ENCODE measurements at regions of chr21 and their contacts with region 1.

Region 1: GRCh38 chr21:32569261-32570230 is 15.8 kb downstream of the TCP10L start:
- DNase-seq: peak; percentile 70 to 93 (median 78)
- ATAC-seq: peak; percentile 87
- H3K4me3 ChIP-seq: peak overlapping the region; percentile 70
- H3K4me3 Mint-ChIP-seq: peak overlapping the region; percentile 90
- H3K27ac ChIP-seq: peak overlapping the region; percentile 40 to 50
- H3K27ac Mint-ChIP-seq: peak overlapping the region; percentile 86
- H3K4me1 ChIP-seq: peaks cover 22% of the 10 kb centered on the region
- H3K4me1 Mint-ChIP-seq: peaks cover 21% of the 10 kb centered on the region
- H3K27me3 ChIP-seq: no peaks in the 10 kb centered on the region
- H3K27me3 Mint-ChIP-seq: no peaks in the 10 kb centered on the region
- CTCF ChIP-seq: peak; percentile 88

Region 2: DNA sequence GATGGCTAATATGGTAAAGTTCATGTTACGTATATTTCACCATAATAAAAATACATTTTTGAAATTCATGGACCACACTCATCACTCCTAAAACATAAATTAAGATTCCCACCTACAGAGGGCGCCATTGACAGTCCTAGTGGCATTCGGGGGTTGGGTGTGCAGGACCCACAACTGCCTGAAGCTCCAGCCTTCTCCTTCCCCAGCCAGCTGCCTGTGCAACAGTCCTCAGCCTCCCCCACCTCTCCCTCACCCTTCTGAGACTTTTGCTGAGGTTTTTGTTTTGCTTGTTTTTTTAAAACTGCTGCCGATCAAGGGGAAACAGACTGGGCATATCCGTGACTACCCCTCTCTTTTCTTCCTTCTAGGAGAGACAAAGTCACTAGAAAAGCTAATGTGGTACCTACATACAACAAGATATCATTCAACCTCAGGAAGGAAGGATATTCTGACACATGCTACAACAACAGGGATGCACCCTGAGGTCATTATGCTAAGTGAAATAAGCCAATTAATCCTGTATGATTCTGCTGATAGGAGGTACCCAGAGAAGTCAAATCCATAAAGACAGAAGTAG is 166.3 kb before region 1 on chr21:
- CTCF ChIA-PET with region 1: interaction called, 7 read pairs
- POLR2A ChIA-PET with region 1: interaction called, 6 read pairs
- intact Hi-C with region 1: loop called (anchors 2 kb)
- DNase-seq: peak in 13 of 14 experiments; percentile 12 to 80 (median 42)
- ATAC-seq: peak; percentile 83
- H3K4me3 ChIP-seq: no peak overlapping the region
- H3K4me3 Mint-ChIP-seq: no peak overlapping the region
- H3K27ac ChIP-seq: no peak overlapping the region
- H3K27ac Mint-ChIP-seq: no peak overlapping the region
- H3K4me1 ChIP-seq: peaks cover 5% of the 10 kb centered on the region
- H3K4me1 Mint-ChIP-seq: peaks cover 9% of the 10 kb centered on the region
- H3K27me3 ChIP-seq: no peaks in the 10 kb centered on the region
- H3K27me3 Mint-ChIP-seq: peaks cover 2% of the 10 kb centered on the region
- CTCF ChIP-seq: peak; percentile 67

Region 3: GRCh38 chr21:32412162-32413014 is 157.2 kb before region 1 on chr21 and contains the start of gene EVA1C:
- CTCF ChIA-PET with region 1: no interaction called
- POLR2A ChIA-PET with region 1: interaction called, 52 read pairs
- intact Hi-C with region 1: loop called in 1 of 2 experiments (anchors 2 kb)
- DNase-seq: peak; percentile 54 to 92 (median 66)
- ATAC-seq: peak; percentile 62
- H3K4me3 ChIP-seq: peak within 1 kb of the TSS; percentile 96
- H3K4me3 Mint-ChIP-seq: peak within 1 kb of the TSS; percentile 97
- H3K27ac ChIP-seq: peak within 1 kb of the TSS; percentile 64 to 96
- H3K27ac Mint-ChIP-seq: peak within 1 kb of the TSS; percentile 97
- H3K4me1 ChIP-seq: peaks cover 31% of the 10 kb centered on the region
- H3K4me1 Mint-ChIP-seq: peaks cover 52% of the 10 kb centered on the region
- H3K27me3 ChIP-seq: no peaks in the 10 kb centered on the region
- H3K27me3 Mint-ChIP-seq: no peaks in the 10 kb centered on the region
- CTCF ChIP-seq: peak; percentile 17
- total RNA-seq, gene EVA1C: 11.1 to 12.7 TPM

Region 4: GRCh38 chr21:32494934-32495703 is 74.4 kb before region 1 on chr21:
- CTCF ChIA-PET with region 1: no interaction called
- POLR2A ChIA-PET with region 1: no interaction called
- intact Hi-C with region 1: loop called (anchors 5 to 10 kb)
- DNase-seq: peak in 1 of 14 experiments; percentile 17
- ATAC-seq: no peak
- H3K4me3 ChIP-seq: no peak overlapping the region
- H3K4me3 Mint-ChIP-seq: no peak overlapping the region
- H3K27ac ChIP-seq: no peak overlapping the region
- H3K27ac Mint-ChIP-seq: peak overlapping the region; percentile 31
- H3K4me1 ChIP-seq: peaks cover 13% of the 10 kb centered on the region
- H3K4me1 Mint-ChIP-seq: peaks cover 10% of the 10 kb centered on the region
- H3K27me3 ChIP-seq: no peaks in the 10 kb centered on the region
- H3K27me3 Mint-ChIP-seq: no peaks in the 10 kb centered on the region
- CTCF ChIP-seq: no peak

Measured in CD4-positive, alpha-beta T cell (primary cell).